ENCODE measurements at regions of chr5 and their contacts with region 1.

Region 1: GRCh38 chr5:127313847-127314473 is 23.4 kb downstream of the MEGF10 start:
- DNase-seq: no peak

Region 2: DNA sequence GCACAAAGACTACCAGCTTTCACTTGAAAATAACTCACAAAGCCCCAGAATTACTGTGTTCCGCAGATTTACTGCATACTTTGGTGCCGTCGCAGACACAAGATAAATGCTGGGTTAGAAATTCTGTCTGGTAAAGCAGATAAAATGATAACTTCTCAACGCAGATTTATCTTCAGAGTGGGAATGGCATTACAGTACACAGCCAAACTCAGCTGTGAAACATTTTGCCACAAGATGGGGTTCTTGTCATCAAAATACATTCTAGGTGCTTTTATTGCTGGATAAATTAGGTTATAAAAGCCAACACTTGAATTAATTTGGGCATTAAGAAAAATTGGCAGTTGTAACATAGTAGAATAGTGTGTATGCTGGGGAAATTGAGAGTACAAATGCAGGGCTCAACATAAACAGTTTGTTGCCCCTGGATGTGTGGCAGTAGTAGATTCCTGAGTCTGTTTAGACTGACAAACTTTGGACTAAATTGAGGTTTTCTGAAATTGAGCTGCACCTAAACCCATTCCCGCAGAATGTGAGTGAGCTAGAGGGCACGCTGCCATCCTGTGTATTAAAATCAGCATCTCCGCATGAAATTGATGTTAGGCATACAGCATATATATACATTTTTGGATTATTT is 475.9 kb before region 1 on chr5:
- intact Hi-C with region 1: loop called (anchors 2 kb)
- DNase-seq: no peak

Region 3: GRCh38 chr5:127184851-127185250 is 129.1 kb before region 1 on chr5:
- intact Hi-C with region 1: no loop called
- DNase-seq: no peak

Measured in cardiac septum (tissue), 1 donor.